ENCODE measurements at regions of chr1 and their contacts with region 1.

Region 1: GRCh38 chr1:204257954-204258752 is 44.4 kb upstream of the GOLT1A start:
- DNase-seq: peak; percentile 69
- H3K4me3 ChIP-seq: no peak overlapping the region
- H3K27ac ChIP-seq: no peak overlapping the region
- H3K4me1 ChIP-seq: no peaks in the 10 kb centered on the region
- H3K27me3 ChIP-seq: no peaks in the 10 kb centered on the region
- CTCF ChIP-seq: peak; percentile 89 to 96
- POLR2A ChIP-seq: no peak

Region 2: DNA sequence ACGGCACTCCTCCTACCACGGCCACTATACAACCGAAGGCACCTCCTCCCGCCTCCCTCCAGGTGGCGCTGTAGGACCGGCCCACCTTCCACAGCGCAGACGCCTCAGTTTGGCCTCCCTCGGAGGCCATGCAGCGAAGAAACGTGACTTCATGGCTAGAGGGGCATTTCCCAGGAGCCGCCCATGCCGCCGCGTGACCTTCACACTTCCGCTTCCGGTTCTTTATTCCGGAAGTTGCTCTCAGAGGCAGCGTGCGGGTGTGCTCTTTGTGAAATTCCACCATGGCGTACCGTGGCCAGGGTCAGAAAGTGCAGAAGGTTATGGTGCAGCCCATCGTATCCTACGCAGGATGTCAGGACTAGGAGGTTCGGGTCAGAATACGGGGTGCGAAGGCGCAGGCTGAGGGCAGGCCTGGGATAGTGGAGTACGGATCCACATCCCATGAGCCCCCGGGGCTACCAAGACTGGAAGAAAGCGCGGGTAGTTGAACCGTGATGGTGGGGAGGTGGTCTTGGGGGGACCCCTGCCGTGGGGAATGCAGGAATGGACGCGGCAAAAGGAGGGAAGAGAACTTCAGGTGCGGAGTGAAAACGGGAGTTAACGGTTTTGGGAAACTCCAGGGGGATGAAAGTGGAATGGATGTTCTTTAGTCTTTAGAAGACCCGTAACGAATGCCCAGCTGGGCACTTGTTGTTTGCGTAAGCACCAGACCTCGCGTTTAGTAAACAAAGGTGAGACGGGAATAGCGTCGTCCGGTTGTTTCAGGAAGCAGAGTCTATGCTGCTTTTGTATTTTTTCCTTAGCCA is 396.6 kb before region 1 on chr1 and contains the start of gene SNRPE:
- CTCF ChIA-PET with region 1: interaction called, 3 read pairs
- POLR2A ChIA-PET with region 1: no interaction called
- dilution Hi-C with region 1: no loop called
- intact Hi-C with region 1: loop called (anchors 1 kb)
- DNase-seq: peak; percentile 99
- H3K4me3 ChIP-seq: peak within 1 kb of the TSS; percentile 67 to 99 (median 94)
- H3K27ac ChIP-seq: peak within 1 kb of the TSS; percentile 71
- H3K4me1 ChIP-seq: peaks cover 23% of the 10 kb centered on the region
- H3K27me3 ChIP-seq: no peaks in the 10 kb centered on the region
- CTCF ChIP-seq: peak; percentile 92 to 95
- POLR2A ChIP-seq: peak; percentile 84
- total RNA-seq, gene SNRPE: 199 and 219 TPM in 2 replicates

Region 3: DNA sequence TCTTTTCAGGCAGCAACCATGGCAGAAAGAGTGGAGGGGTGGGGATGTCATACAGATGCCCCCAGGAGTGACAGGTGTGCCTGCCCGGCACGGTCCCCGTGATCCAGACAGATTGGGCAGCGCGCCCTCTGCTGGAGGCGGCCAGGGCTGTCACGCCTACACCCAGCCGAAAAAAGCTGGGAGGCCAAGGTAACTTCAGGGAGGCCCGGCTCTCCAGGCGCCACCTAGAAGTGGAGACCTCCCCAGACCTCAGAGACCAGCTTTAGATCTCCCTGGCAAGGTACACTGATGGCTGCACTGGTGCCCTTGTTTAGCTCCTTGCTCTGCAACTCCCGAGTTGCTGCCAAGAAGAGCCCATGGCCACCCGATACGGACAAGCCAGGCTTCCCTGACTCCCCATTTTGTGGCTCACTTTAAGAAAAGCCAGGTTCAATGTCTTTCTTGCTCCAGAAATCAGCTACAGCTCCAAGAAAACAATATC is 51.0 kb before region 1 on chr1:
- CTCF ChIA-PET with region 1: interaction called, 10 read pairs
- POLR2A ChIA-PET with region 1: no interaction called
- dilution Hi-C with region 1: no loop called
- intact Hi-C with region 1: no loop called
- DNase-seq: peak; percentile 41
- H3K4me3 ChIP-seq: no peak overlapping the region
- H3K27ac ChIP-seq: no peak overlapping the region
- H3K4me1 ChIP-seq: no peaks in the 10 kb centered on the region
- H3K27me3 ChIP-seq: no peaks in the 10 kb centered on the region
- CTCF ChIP-seq: peak; percentile 89 to 97
- POLR2A ChIP-seq: no peak

Region 4: GRCh38 chr1:204213668-204214662 is 44.2 kb before region 1 on chr1 and contains the start of gene GOLT1A:
- CTCF ChIA-PET with region 1: interaction called, 21 read pairs
- POLR2A ChIA-PET with region 1: no interaction called
- dilution Hi-C with region 1: no loop called
- intact Hi-C with region 1: loop called (anchors 2 kb)
- DNase-seq: peak; percentile 75
- H3K4me3 ChIP-seq: no peak within 1 kb of the TSS
- H3K27ac ChIP-seq: no peak within 1 kb of the TSS
- H3K4me1 ChIP-seq: no peaks in the 10 kb centered on the region
- H3K27me3 ChIP-seq: no peaks in the 10 kb centered on the region
- CTCF ChIP-seq: peak; percentile 75
- POLR2A ChIP-seq: no peak
- total RNA-seq, gene GOLT1A: not detected in 2 replicates

Region 5: DNA sequence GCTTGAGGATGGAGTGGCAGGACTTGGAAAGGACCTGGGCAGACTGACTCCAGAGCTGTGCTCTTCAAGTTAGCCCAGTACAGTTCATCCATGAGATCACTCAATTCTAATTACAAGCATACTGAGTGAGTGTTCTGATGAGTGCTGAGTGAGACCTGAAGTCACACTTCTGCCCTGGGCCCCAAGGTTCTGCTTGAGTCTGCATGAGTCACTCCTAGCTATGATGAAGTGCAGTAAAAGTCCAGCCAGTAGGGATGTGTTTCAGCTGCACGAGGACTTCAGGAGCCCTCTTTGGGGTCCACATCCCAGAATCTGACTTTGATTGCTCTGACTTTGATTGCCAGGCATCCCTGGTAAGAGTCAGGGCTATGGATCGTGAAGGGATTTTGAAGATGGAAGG is 65.7 kb after region 1 on chr1:
- CTCF ChIA-PET with region 1: interaction called, 16 read pairs
- POLR2A ChIA-PET with region 1: no interaction called
- dilution Hi-C with region 1: no loop called
- intact Hi-C with region 1: no loop called
- DNase-seq: no peak
- H3K4me3 ChIP-seq: no peak overlapping the region
- H3K27ac ChIP-seq: no peak overlapping the region
- H3K4me1 ChIP-seq: peaks cover 5% of the 10 kb centered on the region
- H3K27me3 ChIP-seq: no peaks in the 10 kb centered on the region
- CTCF ChIP-seq: no peak
- POLR2A ChIP-seq: no peak

Region 6: DNA sequence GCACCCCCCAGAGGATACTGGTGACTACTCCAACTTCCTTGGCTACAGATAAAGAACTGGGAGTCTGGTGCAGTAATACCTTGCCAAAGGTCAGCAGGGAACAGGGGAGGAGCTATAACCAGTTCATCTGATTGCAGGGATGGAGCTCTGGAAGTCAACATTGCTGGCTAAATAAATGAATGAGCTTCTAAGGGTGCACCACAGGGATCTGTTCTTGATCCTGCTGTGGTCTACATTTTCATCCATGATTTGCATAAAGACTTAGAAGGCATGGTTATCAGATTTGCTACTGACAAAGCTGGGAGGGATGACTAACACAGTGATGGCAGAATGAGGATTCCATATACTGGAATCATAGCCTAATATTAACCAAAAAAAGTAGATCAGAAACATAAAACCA is 83.2 kb after region 1 on chr1:
- CTCF ChIA-PET with region 1: interaction called, 14 read pairs
- POLR2A ChIA-PET with region 1: no interaction called
- dilution Hi-C with region 1: no loop called
- intact Hi-C with region 1: no loop called
- DNase-seq: no peak
- H3K4me3 ChIP-seq: no peak overlapping the region
- H3K27ac ChIP-seq: no peak overlapping the region
- H3K4me1 ChIP-seq: peaks cover 11% of the 10 kb centered on the region
- H3K27me3 ChIP-seq: no peaks in the 10 kb centered on the region
- CTCF ChIP-seq: no peak
- POLR2A ChIP-seq: no peak

Region 7: GRCh38 chr1:204350857-204351573 is 92.9 kb after region 1 on chr1:
- CTCF ChIA-PET with region 1: interaction called, 16 read pairs
- POLR2A ChIA-PET with region 1: no interaction called
- dilution Hi-C with region 1: no loop called
- intact Hi-C with region 1: no loop called
- DNase-seq: peak; percentile 79
- H3K4me3 ChIP-seq: no peak overlapping the region
- H3K27ac ChIP-seq: no peak overlapping the region
- H3K4me1 ChIP-seq: peaks cover 4% of the 10 kb centered on the region
- H3K27me3 ChIP-seq: no peaks in the 10 kb centered on the region
- CTCF ChIP-seq: no peak
- POLR2A ChIP-seq: no peak

Measured in endothelial cell of umbilical vein (primary cell).